Dorsolateral prefrontal cortex (tissue), 120 donors: ENCODE measurements at regions of chr17 and their contacts with region 1.

Region 1: GRCh38 chr17:78421484-78422266 is 43.2 kb downstream of the PGS1 start:
- DNase-seq: peak; percentile 65 to 83 (median 70)
- H3K4me3 ChIP-seq: no peak overlapping the region
- H3K27ac ChIP-seq: peak overlapping the region in 48 of 59 donors; percentile 5 to 84 (median 54)
- H3K27me3 ChIP-seq: no peaks in the 10 kb centered on the region
- CTCF ChIP-seq: peak; percentile 93 to 99 (median 98)

Region 2: GRCh38 chr17:78186692-78187595 is 234.7 kb before region 1 on chr17 and contains the starts of genes AFMID and TK1:
- intact Hi-C with region 1: no loop called
- DNase-seq: peak; percentile 93 to 99 (median 96)
- H3K4me3 ChIP-seq: peak within 1 kb of the TSS; percentile 41 to 90 (median 69)
- H3K27ac ChIP-seq: peak within 1 kb of the TSS in 51 of 59 donors; percentile 3 to 82 (median 62)
- H3K27me3 ChIP-seq: no peaks in the 10 kb centered on the region
- CTCF ChIP-seq: peak; percentile 34 to 90 (median 76)
- total RNA-seq, gene AFMID: 32.6 to 162 (median 68.4) TPM
- total RNA-seq, gene TK1: 0.55 to 5.6 (median 1.9) TPM

Region 3: GRCh38 chr17:78250891-78251794 is 170.5 kb before region 1 on chr17:
- intact Hi-C with region 1: loop called in 1 of 2 experiments (anchors 5 kb)
- DNase-seq: peak; percentile 75 to 90 (median 86)
- H3K4me3 ChIP-seq: peak overlapping the region in 40 of 59 donors; percentile 6 to 58 (median 29)
- H3K27ac ChIP-seq: peak overlapping the region in 58 of 59 donors; percentile 28 to 100 (median 83)
- H3K27me3 ChIP-seq: no peaks in the 10 kb centered on the region
- CTCF ChIP-seq: peak; percentile 98 to 100 (median 100)

Region 4: DNA sequence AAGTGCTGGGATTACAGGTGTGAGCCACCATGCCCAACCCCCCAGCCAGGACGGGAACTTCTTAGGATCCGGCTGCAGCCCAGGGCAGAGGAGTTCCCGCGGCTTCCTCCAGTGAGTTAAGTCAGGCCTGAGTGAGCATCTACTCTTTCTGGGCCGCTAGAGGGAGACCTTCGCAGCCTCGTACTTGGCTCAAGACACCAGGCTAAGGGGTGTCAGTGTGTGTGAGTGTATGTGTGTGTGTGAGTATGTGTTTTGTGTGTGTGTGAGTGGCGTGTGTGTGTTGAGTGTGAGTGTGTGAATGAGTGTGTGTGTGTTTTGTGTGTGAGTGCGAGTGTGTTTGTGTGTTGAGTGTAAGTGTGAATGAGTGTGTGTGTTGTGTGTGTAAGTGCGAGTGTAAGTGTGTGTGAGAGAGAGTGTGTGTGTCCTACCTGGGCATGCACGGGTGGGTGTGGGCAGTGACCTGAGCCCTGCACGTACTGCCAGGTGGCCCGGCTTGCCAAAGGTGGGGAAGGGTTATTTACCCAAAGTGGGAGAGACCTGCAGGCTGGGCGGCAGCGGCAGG is 131.8 kb before region 1 on chr17:
- intact Hi-C with region 1: loop called (anchors 2 to 5 kb)
- DNase-seq: peak; percentile 51 to 83 (median 72)
- H3K4me3 ChIP-seq: no peak overlapping the region
- H3K27ac ChIP-seq: no peak overlapping the region
- H3K27me3 ChIP-seq: no peaks in the 10 kb centered on the region
- CTCF ChIP-seq: peak; percentile 17 to 80 (median 69)

Region 5: GRCh38 chr17:78300962-78301822 is 120.5 kb before region 1 on chr17:
- intact Hi-C with region 1: no loop called
- DNase-seq: no peak
- H3K4me3 ChIP-seq: no peak overlapping the region
- H3K27ac ChIP-seq: no peak overlapping the region
- H3K27me3 ChIP-seq: no peaks in the 10 kb centered on the region
- CTCF ChIP-seq: no peak

Region 6: GRCh38 chr17:78341559-78342448 is 79.9 kb before region 1 on chr17:
- intact Hi-C with region 1: loop called in 1 of 2 experiments (anchors 5 kb)
- DNase-seq: peak in 8 of 10 donors; percentile 44 to 85 (median 64)
- H3K4me3 ChIP-seq: peak overlapping the region; percentile 24 to 65 (median 49)
- H3K27ac ChIP-seq: peak overlapping the region in 58 of 59 donors; percentile 48 to 95 (median 86)
- H3K27me3 ChIP-seq: no peaks in the 10 kb centered on the region
- CTCF ChIP-seq: peak in 34 of 56 donors; percentile 9 to 57 (median 36)

Region 7: DNA sequence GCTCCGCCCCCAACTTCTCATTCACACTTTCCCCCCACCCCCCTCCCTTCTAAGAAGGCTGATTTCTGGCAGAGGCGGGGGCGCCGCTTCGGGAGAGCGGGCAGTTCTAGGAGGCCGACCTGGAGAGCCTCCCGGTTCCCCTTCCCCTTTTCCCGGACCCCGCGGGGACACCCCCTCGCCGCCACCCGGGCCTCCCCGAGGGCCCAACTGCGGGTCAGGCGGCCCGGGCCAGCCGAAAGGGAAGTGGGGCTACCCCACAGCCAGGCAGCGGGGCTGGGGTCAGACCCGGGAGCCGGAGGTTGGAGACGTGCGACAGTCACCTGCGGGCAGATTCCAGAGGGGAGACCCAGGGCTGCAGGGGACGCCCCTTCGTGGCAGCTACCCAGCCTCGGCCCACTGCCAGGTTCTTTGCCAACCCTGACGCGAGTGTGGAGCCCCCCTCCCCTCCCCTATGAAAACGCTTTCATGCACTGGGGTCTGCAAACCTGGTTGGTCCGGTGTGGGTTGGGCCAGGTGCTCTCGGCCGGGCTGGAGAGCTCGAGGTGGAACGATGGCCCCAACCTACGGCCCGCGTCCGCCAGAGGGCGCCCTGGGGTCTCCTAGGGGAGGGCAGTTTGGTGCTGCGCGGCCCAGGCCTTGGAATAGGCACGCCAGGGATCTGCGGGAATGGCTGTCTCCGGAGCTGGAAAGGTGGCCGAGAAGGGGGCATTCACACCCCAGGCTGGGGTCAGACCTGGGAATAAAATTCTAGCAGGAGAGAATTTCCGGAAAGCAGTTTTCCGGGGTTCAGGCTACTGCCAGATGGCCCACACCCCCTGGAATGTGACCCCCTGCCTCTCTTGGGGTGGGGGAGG is 61.1 kb before region 1 on chr17:
- intact Hi-C with region 1: loop called (anchors 5 kb)
- DNase-seq: peak; percentile 51 to 91 (median 82)
- H3K4me3 ChIP-seq: peak overlapping the region; percentile 8 to 87 (median 63)
- H3K27ac ChIP-seq: peak overlapping the region in 56 of 59 donors; percentile 39 to 93 (median 84)
- H3K27me3 ChIP-seq: peaks cover 0 to 15% (median 0%) of the 10 kb centered on the region in 45 donors
- CTCF ChIP-seq: peak; percentile 53 to 92 (median 81)

Region 8: GRCh38 chr17:78378225-78379130 is 43.2 kb before region 1 on chr17 and contains the start of gene PGS1:
- intact Hi-C with region 1: loop called in 1 of 2 experiments (anchors 2 kb)
- DNase-seq: peak; percentile 61 to 89 (median 76)
- H3K4me3 ChIP-seq: peak within 1 kb of the TSS; percentile 67 to 100 (median 97)
- H3K27ac ChIP-seq: peak within 1 kb of the TSS; percentile 43 to 98 (median 90)
- H3K27me3 ChIP-seq: no peaks in the 10 kb centered on the region
- CTCF ChIP-seq: peak in 46 of 56 donors; percentile 10 to 65 (median 38)
- total RNA-seq, gene PGS1: 40.3 to 89.2 (median 57.6) TPM